ENCODE measurements at regions of chr12 and their contacts with region 1.

Region 1: DNA sequence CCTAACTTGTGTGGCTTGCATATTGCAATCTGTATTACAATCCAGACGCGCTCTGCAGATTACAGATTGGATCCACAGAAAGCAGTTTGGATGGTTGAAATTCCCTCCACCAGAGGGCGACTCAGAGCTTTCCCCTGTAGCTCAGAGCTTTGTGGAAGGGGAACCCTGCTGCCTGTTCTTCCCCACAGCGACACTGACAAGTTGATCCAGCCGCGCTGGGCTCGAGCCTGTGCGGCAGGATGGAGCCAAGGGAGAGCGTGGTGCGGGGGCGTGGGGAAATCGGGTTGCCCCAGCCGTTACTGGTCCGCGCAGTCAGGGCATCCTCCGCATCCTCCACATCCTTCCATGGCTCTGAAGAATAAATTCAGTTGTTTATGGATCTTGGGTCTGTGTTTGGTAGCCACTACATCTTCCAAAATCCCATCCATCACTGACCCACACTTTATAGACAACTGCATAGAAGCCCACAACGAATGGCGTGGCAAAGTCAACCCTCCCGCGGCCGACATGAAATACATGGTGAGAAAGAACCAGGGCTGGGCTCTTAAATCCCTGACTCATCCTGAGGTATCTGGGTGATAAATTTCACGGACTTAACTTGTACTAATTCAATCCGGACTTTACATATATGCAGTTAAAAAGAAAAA is at the start of gene GLIPR1L1:
- DNase-seq: peak; percentile 87
- H3K4me3 ChIP-seq: peak within 1 kb of the TSS in 2 of 4 donors; percentile 13 to 29
- H3K27ac ChIP-seq: no peak within 1 kb of the TSS
- H3K4me1 ChIP-seq: peaks cover 0 to 7% (median 3%) of the 10 kb centered on the region in 4 donors
- H3K27me3 ChIP-seq: no peaks in the 10 kb centered on the region
- CTCF ChIP-seq: peak; percentile 77 to 93 (median 86)
- EP300 ChIP-seq: no peak
- POLR2A ChIP-seq: no peak
- total RNA-seq, gene GLIPR1L1: not detected

Region 2: DNA sequence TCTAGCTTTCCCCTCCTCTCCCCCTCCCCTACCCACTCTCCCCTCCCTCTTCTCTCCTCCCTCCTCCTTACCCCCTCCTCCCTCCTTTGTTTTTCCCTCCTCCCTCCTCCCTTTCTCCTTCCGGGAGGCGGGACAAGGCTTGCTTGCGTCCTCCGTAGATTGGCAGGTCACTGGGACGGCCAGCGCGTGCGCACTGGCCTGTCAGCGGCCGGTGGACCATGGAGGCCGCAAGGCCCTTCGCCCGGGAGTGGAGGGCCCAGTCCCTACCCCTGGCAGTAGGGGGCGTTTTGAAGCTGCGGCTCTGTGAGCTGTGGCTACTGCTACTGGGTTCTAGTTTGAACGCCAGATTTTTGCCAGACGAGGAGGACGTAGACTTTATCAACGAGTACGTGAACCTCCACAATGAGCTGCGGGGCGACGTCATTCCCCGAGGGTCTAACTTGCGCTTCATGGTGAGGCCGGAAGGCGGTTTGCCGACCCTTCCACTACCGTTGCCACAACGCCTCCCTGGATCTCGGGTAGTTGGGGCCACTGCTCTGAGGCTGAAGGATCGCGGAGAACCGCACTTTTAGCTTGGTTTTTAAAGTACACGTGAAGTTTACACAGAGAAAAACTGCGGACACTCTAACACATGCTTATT is 56.5 kb after region 1 on chr12 and contains the start of gene GLIPR1L2:
- in situ Hi-C with region 1: no loop called
- intact Hi-C with region 1: loop called (anchors 2 kb)
- DNase-seq: peak; percentile 95
- H3K4me3 ChIP-seq: peak within 1 kb of the TSS; percentile 47 to 62 (median 51)
- H3K27ac ChIP-seq: peak within 1 kb of the TSS; percentile 84 to 91 (median 86)
- H3K4me1 ChIP-seq: peaks cover 0 to 22% (median 0%) of the 10 kb centered on the region in 4 donors
- H3K27me3 ChIP-seq: no peaks in the 10 kb centered on the region
- CTCF ChIP-seq: peak; percentile 67 to 82 (median 76)
- EP300 ChIP-seq: no peak
- POLR2A ChIP-seq: peak; percentile 52
- total RNA-seq, gene GLIPR1L2: 0.95 TPM in 1 of 4 donors, not detected in the others

Region 3: GRCh38 chr12:75480469-75480949 is 146.0 kb after region 1 on chr12 and contains the start of gene GLIPR1:
- in situ Hi-C with region 1: no loop called
- intact Hi-C with region 1: loop called (anchors 10 kb)
- DNase-seq: peak; percentile 68
- H3K4me3 ChIP-seq: peak within 1 kb of the TSS; percentile 12 to 41 (median 22)
- H3K27ac ChIP-seq: peak within 1 kb of the TSS; percentile 72 to 83 (median 78)
- H3K4me1 ChIP-seq: peaks cover 0 to 20% (median 10%) of the 10 kb centered on the region in 4 donors
- H3K27me3 ChIP-seq: no peaks in the 10 kb centered on the region
- CTCF ChIP-seq: no peak
- EP300 ChIP-seq: no peak
- POLR2A ChIP-seq: peak; percentile 69
- total RNA-seq, gene GLIPR1: 3.3 to 10.6 (median 3.6) TPM

Region 4: GRCh38 chr12:75505706-75506312 is 171.3 kb after region 1 on chr12:
- in situ Hi-C with region 1: loop called in 2 of 4 experiments (anchors 10 kb)
- intact Hi-C with region 1: no loop called
- DNase-seq: no peak
- H3K4me3 ChIP-seq: no peak overlapping the region
- H3K27ac ChIP-seq: no peak overlapping the region
- H3K4me1 ChIP-seq: peaks cover 9 to 14% (median 10%) of the 10 kb centered on the region in 4 donors
- H3K27me3 ChIP-seq: no peaks in the 10 kb centered on the region
- CTCF ChIP-seq: peak; percentile 29 to 53 (median 38)
- EP300 ChIP-seq: no peak
- POLR2A ChIP-seq: no peak

Measured in transverse colon (tissue), 4 donors.